ENCODE measurements at regions of chr2 and their contacts with region 1.

Region 1: GRCh38 chr2:96233436-96233835 is 24.8 kb upstream of the STARD7 start:
- DNase-seq: no peak
- H3K4me3 ChIP-seq: no peak overlapping the region
- H3K27ac ChIP-seq: no peak overlapping the region
- H3K4me1 ChIP-seq: no peaks in the 10 kb centered on the region
- H3K27me3 ChIP-seq: no peaks in the 10 kb centered on the region
- CTCF ChIP-seq: no peak
- EP300 ChIP-seq: no peak
- POLR2A ChIP-seq: no peak
- RAD21 ChIP-seq: no peak

Region 2: DNA sequence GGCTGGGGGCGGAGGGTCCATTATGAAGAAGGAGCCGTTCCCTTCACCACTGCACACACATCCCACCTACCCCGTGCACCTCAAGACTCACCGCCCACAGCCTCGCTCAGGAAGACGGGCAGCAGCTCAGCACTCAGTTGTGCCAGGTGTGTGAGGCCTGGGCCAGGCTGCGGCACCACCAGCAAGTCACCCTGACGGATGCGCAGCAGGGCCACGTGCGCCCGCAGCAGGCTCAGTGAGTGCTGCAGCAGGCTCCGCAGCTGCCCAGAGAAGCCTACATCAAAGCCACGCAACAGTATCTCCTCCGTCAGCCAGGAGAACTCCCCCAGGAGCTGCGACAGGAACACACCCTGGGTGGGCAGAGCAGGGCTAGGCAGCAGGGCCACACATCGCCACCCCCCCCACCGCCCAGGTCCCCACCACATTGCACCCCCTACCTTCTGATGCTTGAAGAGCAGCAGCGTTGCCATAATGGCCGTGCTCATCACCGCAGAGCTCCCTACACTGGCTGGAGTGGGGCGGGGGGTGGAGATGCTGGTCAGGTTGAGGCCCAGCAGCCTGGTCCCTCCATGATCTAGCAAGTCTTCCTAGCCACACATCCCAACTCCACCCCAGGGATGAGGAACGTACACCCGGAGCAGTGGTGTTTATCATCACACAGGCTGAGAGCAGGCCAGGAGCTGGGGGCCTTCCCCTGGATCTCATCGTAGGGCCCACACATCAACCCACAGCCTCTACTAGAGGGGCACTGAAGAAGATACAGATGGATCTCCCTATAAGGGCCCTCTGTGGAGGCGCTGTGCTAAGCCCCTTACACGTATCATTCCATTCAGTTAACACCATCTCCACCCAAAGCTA is 208.9 kb before region 1 on chr2:
- CTCF ChIA-PET with region 1: interaction called, 11 read pairs
- POLR2A ChIA-PET with region 1: no interaction called
- DNase-seq: no peak
- H3K4me3 ChIP-seq: no peak overlapping the region
- H3K27ac ChIP-seq: no peak overlapping the region
- H3K4me1 ChIP-seq: no peaks in the 10 kb centered on the region
- H3K27me3 ChIP-seq: no peaks in the 10 kb centered on the region
- CTCF ChIP-seq: peak in 2 of 3 experiments; percentile 19 to 20; a peak in 3 of 4 replicates
- EP300 ChIP-seq: no peak
- POLR2A ChIP-seq: no peak
- RAD21 ChIP-seq: 0 out of 4 replicates have a peak, but pooled peaks of 1 of the 2 experiments have one; percentile 7

Region 3: GRCh38 chr2:96191937-96192670 is 41.3 kb before region 1 on chr2:
- CTCF ChIA-PET with region 1: no interaction called
- POLR2A ChIA-PET with region 1: no interaction called
- DNase-seq: no peak
- H3K4me3 ChIP-seq: no peak overlapping the region
- H3K27ac ChIP-seq: no peak overlapping the region
- H3K4me1 ChIP-seq: no peaks in the 10 kb centered on the region
- H3K27me3 ChIP-seq: no peaks in the 10 kb centered on the region
- CTCF ChIP-seq: no peak
- EP300 ChIP-seq: no peak
- POLR2A ChIP-seq: no peak
- RAD21 ChIP-seq: no peak

Region 4: DNA sequence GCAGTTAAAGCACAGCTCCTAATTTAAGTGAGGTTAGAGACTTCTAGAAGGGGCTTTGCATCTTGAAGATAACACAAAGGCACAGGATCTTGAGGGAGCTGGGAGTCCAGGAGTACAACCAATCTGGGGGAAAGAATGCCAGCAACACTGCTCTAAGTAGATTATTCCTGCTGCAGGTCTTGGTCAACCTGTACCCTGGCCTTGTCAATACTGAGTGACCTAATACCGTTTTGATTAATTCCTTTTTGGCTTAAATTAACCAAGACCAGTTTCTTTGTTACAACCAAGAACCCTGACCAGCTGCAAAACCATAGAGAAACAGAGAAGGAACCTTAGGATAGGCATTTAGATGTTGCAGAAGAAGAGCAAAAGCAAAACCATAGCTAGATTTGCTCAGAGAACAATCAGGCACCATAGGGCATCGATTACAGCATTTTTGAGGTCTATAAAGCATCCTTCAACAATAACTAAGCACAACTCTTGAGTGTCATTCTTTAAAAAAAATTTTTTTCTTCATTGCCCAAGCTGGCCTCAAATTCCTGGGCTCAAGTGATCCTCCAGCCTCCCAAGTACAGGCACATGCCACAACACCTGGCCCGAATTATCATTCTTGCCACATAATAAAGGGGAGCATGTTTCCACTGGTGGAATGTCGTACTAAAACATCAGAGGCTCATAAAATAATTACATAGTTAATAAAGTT is 31.1 kb before region 1 on chr2:
- CTCF ChIA-PET with region 1: no interaction called
- POLR2A ChIA-PET with region 1: no interaction called
- DNase-seq: no peak
- H3K4me3 ChIP-seq: no peak overlapping the region
- H3K27ac ChIP-seq: no peak overlapping the region
- H3K4me1 ChIP-seq: peaks cover 2 to 6% (median 4%) of the 10 kb centered on the region in 4 experiments; a peak in 4 of 7 replicates
- H3K27me3 ChIP-seq: no peaks in the 10 kb centered on the region
- CTCF ChIP-seq: no peak
- EP300 ChIP-seq: no peak
- POLR2A ChIP-seq: no peak
- RAD21 ChIP-seq: no peak

Region 5: DNA sequence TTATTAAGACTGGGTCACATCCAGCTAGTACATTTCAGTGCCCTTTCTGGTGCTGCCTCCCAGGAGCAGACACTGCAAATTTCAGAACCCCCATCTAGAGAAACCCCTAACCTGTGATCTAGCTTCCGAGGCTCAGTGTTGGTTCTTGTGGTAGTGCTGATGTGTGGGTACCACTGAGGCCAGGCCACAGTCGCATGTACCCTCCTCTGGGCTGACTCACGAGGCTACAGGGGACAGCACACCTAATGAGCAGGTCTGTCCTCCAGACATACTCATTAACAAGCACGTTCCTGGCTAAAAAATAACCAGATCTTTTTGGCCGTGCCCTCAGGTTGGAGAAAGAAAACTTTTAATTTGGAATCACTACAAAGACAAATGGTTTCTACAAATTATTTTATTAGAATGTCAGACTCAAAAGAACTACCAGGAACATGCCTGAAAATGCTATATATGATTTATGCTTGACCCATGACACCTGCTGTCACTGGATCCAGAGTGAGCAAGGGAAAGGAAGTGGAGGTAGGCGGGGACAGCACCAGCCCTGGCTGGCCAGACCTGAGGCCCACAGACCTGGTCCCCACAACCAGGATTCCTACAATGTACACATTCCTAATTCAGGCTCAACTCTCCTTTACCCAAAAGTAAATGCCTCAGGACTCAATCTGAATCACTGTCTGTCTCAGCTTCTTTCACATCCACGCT is 41.1 kb after region 1 on chr2:
- CTCF ChIA-PET with region 1: no interaction called
- POLR2A ChIA-PET with region 1: no interaction called
- DNase-seq: no peak
- H3K4me3 ChIP-seq: no peak overlapping the region
- H3K27ac ChIP-seq: no peak overlapping the region
- H3K4me1 ChIP-seq: no peaks in the 10 kb centered on the region
- H3K27me3 ChIP-seq: no peaks in the 10 kb centered on the region
- CTCF ChIP-seq: no peak
- EP300 ChIP-seq: no peak
- POLR2A ChIP-seq: no peak
- RAD21 ChIP-seq: no peak

Region 6: GRCh38 chr2:96344011-96344410 is 110.6 kb after region 1 on chr2:
- CTCF ChIA-PET with region 1: no interaction called
- POLR2A ChIA-PET with region 1: no interaction called
- DNase-seq: no peak
- H3K4me3 ChIP-seq: no peak overlapping the region
- H3K27ac ChIP-seq: no peak overlapping the region
- H3K4me1 ChIP-seq: no peaks in the 10 kb centered on the region; a peak in 1 of 7 replicates
- H3K27me3 ChIP-seq: no peaks in the 10 kb centered on the region
- CTCF ChIP-seq: no peak
- EP300 ChIP-seq: no peak
- POLR2A ChIP-seq: no peak
- RAD21 ChIP-seq: no peak

Measured in H1 (cell line).